Posterior vena cava (tissue), 2 donors: ENCODE measurements at regions of chr1 and their contacts with region 1.

Region 1: GRCh38 chr1:190168893-190169667 is 308.6 kb downstream of the BRINP3 start:
- DNase-seq: no peak

Region 2: GRCh38 chr1:190212450-190212849 is 43.4 kb after region 1 on chr1:
- intact Hi-C with region 1: no loop called
- DNase-seq: no peak

Region 3: DNA sequence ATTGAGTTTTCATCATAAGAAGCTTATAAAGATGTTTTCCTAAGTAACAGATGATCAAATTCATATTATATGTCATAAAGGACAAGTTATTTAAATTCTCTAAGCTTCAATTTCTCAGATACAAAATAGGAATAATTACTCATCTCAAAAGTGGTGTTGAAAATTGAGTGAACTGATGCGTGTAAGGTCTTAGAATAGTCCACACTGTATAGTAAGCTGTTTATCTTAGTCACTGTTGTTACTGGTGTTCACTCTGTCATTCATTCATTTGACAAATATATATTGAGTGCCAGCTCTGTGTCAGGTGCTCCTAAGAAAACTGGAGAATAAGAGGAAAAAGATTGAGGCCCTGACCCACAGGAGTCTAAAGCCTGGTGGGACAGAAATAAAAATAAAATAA is 494.9 kb after region 1 on chr1:
- intact Hi-C with region 1: loop called in 1 of 2 experiments (anchors 10 kb)
- DNase-seq: no peak